MCF 10A (cell line): ENCODE measurements at regions of chr12 and their contacts with region 1.

Region 1: DNA sequence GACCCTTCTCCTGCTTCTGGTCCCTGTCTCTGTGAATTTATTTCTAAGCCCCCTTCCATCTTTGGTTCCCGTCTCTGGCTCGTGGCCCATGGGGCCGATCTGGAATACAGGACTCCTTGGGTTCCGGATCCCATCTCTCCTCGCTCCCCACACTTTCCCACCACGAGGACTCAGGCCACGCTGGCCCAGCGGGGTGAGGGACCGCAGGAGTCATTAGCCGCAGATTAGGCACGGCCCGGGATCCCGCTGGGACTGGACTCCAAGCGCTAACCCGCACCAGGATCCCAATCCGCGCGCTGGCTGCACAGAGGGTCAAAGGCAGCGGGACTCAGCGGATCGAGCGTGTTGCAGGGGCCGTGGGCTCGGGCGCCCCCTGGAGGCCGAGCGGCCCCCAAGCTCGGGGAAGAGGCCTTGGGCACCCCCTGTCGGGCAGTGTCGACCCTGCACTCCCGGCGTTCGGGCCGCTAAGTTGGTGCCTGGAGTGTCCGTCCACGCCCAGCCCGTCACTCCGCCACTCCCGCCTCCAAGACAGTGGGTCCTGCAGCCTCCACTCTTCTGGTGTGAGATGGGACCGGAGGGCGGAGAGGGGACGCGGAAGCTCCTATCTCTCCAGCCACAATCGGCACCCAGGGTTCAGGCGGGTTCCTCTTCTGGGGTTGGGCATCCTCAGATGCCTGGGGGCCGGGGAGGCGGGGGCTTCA is 9.5 kb downstream of the SHMT2 start:
- DNase-seq: peak; percentile 84
- H3K4me3 Mint-ChIP-seq: peak overlapping the region; percentile 68
- H3K27ac Mint-ChIP-seq: peak overlapping the region; percentile 4
- H3K4me1 Mint-ChIP-seq: peaks cover 46% of the 10 kb centered on the region
- H3K27me3 Mint-ChIP-seq: no peaks in the 10 kb centered on the region
- CTCF ChIP-seq: peak; percentile 100

Region 2: DNA sequence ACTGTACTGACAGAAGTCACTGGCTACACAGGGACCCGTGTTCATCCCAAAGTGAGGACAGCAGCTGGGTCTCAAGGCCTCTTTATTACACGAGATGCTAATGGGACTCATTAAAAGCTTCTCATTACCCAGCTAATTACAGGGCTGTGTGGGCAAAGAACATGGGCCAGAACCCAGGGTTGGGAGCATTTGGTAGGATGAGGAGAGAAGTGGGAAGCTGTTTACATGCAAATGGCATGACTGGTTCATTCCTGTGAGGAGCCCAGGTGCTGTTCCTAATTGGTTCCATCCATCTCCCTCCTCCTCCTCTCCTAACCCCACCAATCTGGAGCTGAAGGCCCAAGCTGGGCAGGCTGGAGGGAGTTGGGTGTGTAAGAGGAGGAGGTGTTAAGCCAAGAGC is 213.8 kb before region 1 on chr12:
- CTCF ChIA-PET with region 1: no interaction called
- POLR2A ChIA-PET with region 1: no interaction called
- intact Hi-C with region 1: no loop called
- DNase-seq: no peak
- H3K4me3 Mint-ChIP-seq: no peak overlapping the region
- H3K27ac Mint-ChIP-seq: no peak overlapping the region
- H3K4me1 Mint-ChIP-seq: no peaks in the 10 kb centered on the region
- H3K27me3 Mint-ChIP-seq: peaks cover 27% of the 10 kb centered on the region
- CTCF ChIP-seq: no peak

Region 3: DNA sequence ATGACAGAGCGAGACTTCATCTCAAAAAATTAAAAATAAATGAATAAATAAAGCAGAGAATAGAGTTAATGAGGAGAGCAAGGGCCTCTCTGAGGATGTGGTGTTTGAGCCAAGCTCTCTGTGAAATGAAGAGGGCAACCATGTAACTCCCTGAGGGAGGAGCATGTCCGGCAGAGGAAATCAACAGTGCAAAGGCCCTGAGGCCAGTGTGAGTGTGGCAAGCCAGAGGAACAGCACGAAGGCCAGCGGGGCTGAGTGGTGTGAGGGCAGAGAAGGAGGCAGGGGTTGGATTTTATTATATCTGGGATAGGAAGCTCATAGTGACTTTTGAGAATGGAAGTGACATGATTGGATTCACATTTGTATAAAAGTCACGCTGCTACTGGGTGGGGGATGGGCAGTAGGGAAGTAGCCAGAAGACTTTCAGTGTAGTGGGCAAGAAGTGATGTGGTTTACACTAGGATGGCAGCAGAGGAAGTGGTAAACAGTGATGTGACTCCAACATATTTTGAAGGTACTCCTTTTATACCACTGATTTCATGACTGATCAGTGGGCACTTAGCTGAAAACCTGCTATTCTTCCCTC is 81.3 kb before region 1 on chr12:
- CTCF ChIA-PET with region 1: no interaction called
- POLR2A ChIA-PET with region 1: no interaction called
- intact Hi-C with region 1: no loop called
- DNase-seq: no peak
- H3K4me3 Mint-ChIP-seq: no peak overlapping the region
- H3K27ac Mint-ChIP-seq: no peak overlapping the region
- H3K4me1 Mint-ChIP-seq: peaks cover 11% of the 10 kb centered on the region
- H3K27me3 Mint-ChIP-seq: no peaks in the 10 kb centered on the region
- CTCF ChIP-seq: no peak

Region 4: GRCh38 chr12:57248934-57249742 is 10.1 kb after region 1 on chr12:
- CTCF ChIA-PET with region 1: interaction called, 11 read pairs
- POLR2A ChIA-PET with region 1: no interaction called
- intact Hi-C with region 1: no loop called
- DNase-seq: no peak
- H3K4me3 Mint-ChIP-seq: no peak overlapping the region
- H3K27ac Mint-ChIP-seq: no peak overlapping the region
- H3K4me1 Mint-ChIP-seq: peaks cover 8% of the 10 kb centered on the region
- H3K27me3 Mint-ChIP-seq: no peaks in the 10 kb centered on the region
- CTCF ChIP-seq: no peak

Region 5: GRCh38 chr12:57309420-57309819 is 70.4 kb after region 1 on chr12:
- CTCF ChIA-PET with region 1: no interaction called
- POLR2A ChIA-PET with region 1: no interaction called
- intact Hi-C with region 1: no loop called
- DNase-seq: no peak
- H3K4me3 Mint-ChIP-seq: no peak overlapping the region
- H3K27ac Mint-ChIP-seq: peak overlapping the region; percentile 66
- H3K4me1 Mint-ChIP-seq: peaks cover 13% of the 10 kb centered on the region
- H3K27me3 Mint-ChIP-seq: no peaks in the 10 kb centered on the region
- CTCF ChIP-seq: no peak

Region 6: GRCh38 chr12:57340104-57340503 is 101.1 kb after region 1 on chr12:
- CTCF ChIA-PET with region 1: no interaction called
- POLR2A ChIA-PET with region 1: no interaction called
- intact Hi-C with region 1: no loop called
- DNase-seq: no peak
- H3K4me3 Mint-ChIP-seq: no peak overlapping the region
- H3K27ac Mint-ChIP-seq: no peak overlapping the region
- H3K4me1 Mint-ChIP-seq: peaks cover 6% of the 10 kb centered on the region
- H3K27me3 Mint-ChIP-seq: no peaks in the 10 kb centered on the region
- CTCF ChIP-seq: no peak